CD8-positive, alpha-beta T cell (primary cell): ENCODE measurements at regions of chr4 and their contacts with region 1.

Region 1: DNA sequence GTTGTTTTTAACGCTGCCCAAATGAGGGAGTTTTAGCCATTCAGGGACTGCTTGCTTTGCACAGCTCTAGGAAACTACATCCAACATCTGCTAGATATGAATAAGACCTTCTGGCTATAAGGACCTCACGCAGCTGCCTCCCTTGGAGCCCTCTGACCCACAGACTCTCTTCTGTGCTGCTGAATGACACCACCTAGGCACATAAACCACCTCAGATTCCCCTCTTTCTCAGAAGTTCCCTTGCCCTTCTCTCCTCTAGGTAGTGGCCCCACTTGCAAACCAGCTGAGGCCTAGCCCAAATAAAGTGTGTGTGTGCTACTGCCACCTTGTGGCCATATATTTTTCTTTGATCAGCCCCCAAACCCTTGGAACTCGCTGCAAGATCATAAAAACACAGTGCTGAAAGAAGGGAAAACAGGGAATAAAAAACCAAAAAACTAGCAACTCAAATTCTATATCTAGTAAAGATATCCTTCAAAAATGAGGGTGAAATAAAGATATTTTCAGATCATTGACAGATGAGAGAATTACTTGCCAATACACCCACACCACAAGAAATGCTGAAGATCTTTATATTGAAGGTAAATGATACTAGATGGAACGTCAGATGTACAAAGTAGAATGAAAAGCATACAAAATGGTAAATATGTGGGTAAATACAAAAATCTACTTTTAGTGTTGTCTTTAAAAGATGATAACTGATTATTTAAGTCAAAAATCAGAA is 265.9 kb downstream of the ADAMTS3 start:
- DNase-seq: peak in 7 of 9 experiments; percentile 7 to 57 (median 40)
- ATAC-seq: peak; percentile 66
- H3K4me3 ChIP-seq: no peak overlapping the region
- H3K4me3 Mint-ChIP-seq: no peak overlapping the region
- H3K27ac ChIP-seq: no peak overlapping the region
- H3K27ac Mint-ChIP-seq: no peak overlapping the region
- H3K4me1 ChIP-seq: no peaks in the 10 kb centered on the region
- H3K4me1 Mint-ChIP-seq: no peaks in the 10 kb centered on the region
- H3K27me3 ChIP-seq: no peaks in the 10 kb centered on the region
- H3K27me3 Mint-ChIP-seq: peaks cover 2% of the 10 kb centered on the region
- CTCF ChIP-seq: peak; percentile 77

Region 2: DNA sequence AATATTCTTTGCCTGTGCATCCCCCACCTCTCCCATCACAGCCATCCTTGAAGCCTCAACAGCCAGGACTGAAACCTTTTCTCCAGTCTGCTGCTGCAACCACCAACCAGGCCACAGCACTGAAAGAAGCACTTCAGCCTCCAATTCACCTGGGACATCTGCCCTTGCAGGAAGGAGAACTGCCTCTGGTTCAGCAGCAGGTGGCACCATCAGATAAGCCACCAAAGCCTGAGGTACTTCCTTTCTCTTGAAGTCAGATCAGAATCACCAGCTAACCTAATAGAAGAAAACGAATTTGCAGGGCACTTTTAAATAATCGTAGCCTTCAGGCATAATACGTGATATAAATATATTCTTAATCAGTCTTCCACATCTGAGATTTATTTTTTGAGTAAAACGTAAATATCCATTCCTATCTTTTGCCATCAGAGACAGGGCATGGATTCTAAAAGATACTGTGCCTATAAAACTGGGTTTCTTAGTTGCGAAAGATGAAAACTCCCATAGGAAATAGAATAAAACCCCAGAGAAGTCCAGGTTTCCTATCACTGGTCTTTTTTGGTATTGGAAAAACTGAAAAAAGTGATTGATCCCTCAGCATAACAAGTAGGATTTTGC is 1701.6 kb before region 1 on chr4:
- CTCF ChIA-PET with region 1: interaction called, 3 read pairs
- POLR2A ChIA-PET with region 1: no interaction called
- intact Hi-C with region 1: loop called in 1 of 2 experiments (anchors 1 kb)
- DNase-seq: peak; percentile 34 to 79 (median 61)
- ATAC-seq: peak; percentile 77
- H3K4me3 ChIP-seq: no peak overlapping the region
- H3K4me3 Mint-ChIP-seq: no peak overlapping the region
- H3K27ac ChIP-seq: no peak overlapping the region
- H3K27ac Mint-ChIP-seq: no peak overlapping the region
- H3K4me1 ChIP-seq: peaks cover 6% of the 10 kb centered on the region
- H3K4me1 Mint-ChIP-seq: no peaks in the 10 kb centered on the region
- H3K27me3 ChIP-seq: no peaks in the 10 kb centered on the region
- H3K27me3 Mint-ChIP-seq: peaks cover 4% of the 10 kb centered on the region
- CTCF ChIP-seq: peak; percentile 90

Region 3: DNA sequence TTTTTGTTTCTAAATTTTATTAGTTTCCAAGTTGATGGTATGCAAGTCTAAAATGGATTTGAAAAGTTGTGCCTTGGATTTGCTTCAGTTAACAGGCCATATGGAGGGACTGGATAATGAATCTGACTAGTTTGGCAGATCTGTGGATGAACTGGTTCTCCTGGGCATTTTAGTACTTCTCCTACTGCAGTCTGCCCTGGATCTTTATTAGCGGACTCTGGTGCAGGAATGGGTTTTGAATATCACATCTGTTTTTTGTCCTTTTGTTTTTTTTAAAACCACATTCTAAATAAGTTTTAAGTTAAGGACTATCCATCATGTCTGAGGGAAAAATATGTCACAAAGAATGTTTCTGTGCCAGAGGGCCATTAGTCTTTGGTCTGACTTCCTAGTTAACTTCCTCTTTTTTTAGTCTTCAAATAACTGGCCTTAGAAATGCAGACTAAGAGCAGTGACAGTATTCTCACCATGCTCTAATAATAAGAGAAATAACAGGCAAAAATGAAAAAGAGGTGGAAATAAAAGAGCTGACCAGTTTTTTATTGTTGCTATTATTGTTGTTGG is 1323.6 kb before region 1 on chr4:
- CTCF ChIA-PET with region 1: no interaction called
- POLR2A ChIA-PET with region 1: no interaction called
- intact Hi-C with region 1: loop called (anchors 5 to 10 kb)
- DNase-seq: no peak
- ATAC-seq: no peak
- H3K4me3 ChIP-seq: no peak overlapping the region
- H3K4me3 Mint-ChIP-seq: no peak overlapping the region
- H3K27ac ChIP-seq: no peak overlapping the region
- H3K27ac Mint-ChIP-seq: no peak overlapping the region
- H3K4me1 ChIP-seq: no peaks in the 10 kb centered on the region
- H3K4me1 Mint-ChIP-seq: no peaks in the 10 kb centered on the region
- H3K27me3 ChIP-seq: no peaks in the 10 kb centered on the region
- H3K27me3 Mint-ChIP-seq: no peaks in the 10 kb centered on the region
- CTCF ChIP-seq: no peak

Region 4: DNA sequence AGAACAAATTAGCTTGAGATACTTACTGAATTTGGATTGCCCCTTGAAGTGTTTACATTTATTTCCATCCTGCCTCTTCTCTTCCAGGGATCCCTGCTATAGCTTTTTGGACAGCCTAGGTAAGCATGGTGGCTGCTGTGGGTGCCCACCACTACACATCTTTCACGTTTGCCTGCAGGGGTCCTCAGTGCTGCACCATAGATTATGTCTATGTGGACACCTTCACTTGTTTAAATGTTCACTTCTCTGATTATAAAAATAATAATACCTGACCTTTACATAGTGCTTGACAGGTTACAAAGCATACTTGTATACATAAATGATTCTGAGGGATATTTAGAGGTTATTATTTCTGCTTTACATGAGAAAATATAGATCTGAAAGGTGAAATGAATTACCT is 1032.2 kb before region 1 on chr4:
- CTCF ChIA-PET with region 1: no interaction called
- POLR2A ChIA-PET with region 1: no interaction called
- intact Hi-C with region 1: loop called in 1 of 2 experiments (anchors 2 kb)
- DNase-seq: peak in 6 of 9 experiments; percentile 21 to 65 (median 45)
- ATAC-seq: no peak
- H3K4me3 ChIP-seq: no peak overlapping the region
- H3K4me3 Mint-ChIP-seq: no peak overlapping the region
- H3K27ac ChIP-seq: no peak overlapping the region
- H3K27ac Mint-ChIP-seq: no peak overlapping the region
- H3K4me1 ChIP-seq: peaks cover 12% of the 10 kb centered on the region
- H3K4me1 Mint-ChIP-seq: peaks cover 18% of the 10 kb centered on the region
- H3K27me3 ChIP-seq: no peaks in the 10 kb centered on the region
- H3K27me3 Mint-ChIP-seq: no peaks in the 10 kb centered on the region
- CTCF ChIP-seq: peak; percentile 26

Region 5: GRCh38 chr4:71696992-71697391 is 606.2 kb before region 1 on chr4:
- CTCF ChIA-PET with region 1: no interaction called
- POLR2A ChIA-PET with region 1: no interaction called
- intact Hi-C with region 1: no loop called
- DNase-seq: no peak
- ATAC-seq: no peak
- H3K4me3 ChIP-seq: no peak overlapping the region
- H3K4me3 Mint-ChIP-seq: no peak overlapping the region
- H3K27ac ChIP-seq: no peak overlapping the region
- H3K27ac Mint-ChIP-seq: no peak overlapping the region
- H3K4me1 ChIP-seq: no peaks in the 10 kb centered on the region
- H3K4me1 Mint-ChIP-seq: no peaks in the 10 kb centered on the region
- H3K27me3 ChIP-seq: peaks cover 0 to 3% of the 10 kb centered on the region in 2 experiments
- H3K27me3 Mint-ChIP-seq: peaks cover 12% of the 10 kb centered on the region
- CTCF ChIP-seq: no peak